ENCODE measurements at regions of chr11 and their contacts with region 1.

Region 1: DNA sequence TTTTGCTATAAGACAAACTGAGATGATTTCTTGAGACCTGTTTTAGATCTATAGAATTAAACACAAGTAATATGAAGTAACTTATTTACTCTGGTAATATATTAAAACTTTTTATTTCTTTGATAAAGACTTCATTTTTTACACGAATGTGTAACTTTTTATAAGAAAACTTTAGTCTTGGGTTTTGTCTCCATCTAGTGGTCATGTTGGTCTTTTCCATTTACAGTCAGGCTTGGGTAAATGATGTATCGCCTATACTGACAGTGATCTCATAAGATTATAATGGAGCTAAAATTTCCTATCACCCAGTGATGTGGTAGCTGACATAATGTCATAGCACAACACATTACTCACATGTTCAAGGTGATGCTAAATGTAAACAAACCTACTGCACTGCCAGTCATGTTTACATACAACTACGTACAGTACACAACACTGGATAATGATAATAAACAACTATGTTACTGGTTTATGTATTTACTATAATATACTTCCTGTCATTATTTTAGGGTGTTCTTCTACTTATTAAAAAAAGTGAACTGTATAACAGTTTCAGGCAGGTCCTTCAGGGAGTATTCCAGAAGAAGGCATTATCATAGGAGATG is 7.5 kb upstream of the C11orf97 start:
- DNase-seq: peak in 1 of 2 experiments; percentile 62
- H3K4me3 ChIP-seq: no peak overlapping the region
- H3K4me3 Mint-ChIP-seq: no peak overlapping the region
- H3K27ac Mint-ChIP-seq: no peak overlapping the region
- H3K4me1 ChIP-seq: no peaks in the 10 kb centered on the region
- H3K4me1 Mint-ChIP-seq: no peaks in the 10 kb centered on the region
- H3K27me3 ChIP-seq: no peaks in the 10 kb centered on the region
- H3K27me3 Mint-ChIP-seq: peaks cover 5% of the 10 kb centered on the region
- CTCF ChIP-seq: peak; percentile 87 to 88

Region 2: GRCh38 chr11:94171693-94172440 is 332.9 kb before region 1 on chr11:
- CTCF ChIA-PET with region 1: no interaction called
- POLR2A ChIA-PET with region 1: interaction called, 4 read pairs
- intact Hi-C with region 1: loop called (anchors 1 kb)
- DNase-seq: peak in 1 of 2 experiments; percentile 66
- H3K4me3 ChIP-seq: no peak overlapping the region
- H3K4me3 Mint-ChIP-seq: no peak overlapping the region
- H3K27ac Mint-ChIP-seq: no peak overlapping the region
- H3K4me1 ChIP-seq: no peaks in the 10 kb centered on the region
- H3K4me1 Mint-ChIP-seq: peaks cover 6% of the 10 kb centered on the region
- H3K27me3 ChIP-seq: no peaks in the 10 kb centered on the region
- H3K27me3 Mint-ChIP-seq: no peaks in the 10 kb centered on the region
- CTCF ChIP-seq: peak; percentile 86 to 92

Region 3: GRCh38 chr11:94183886-94184264 is 320.9 kb before region 1 on chr11:
- CTCF ChIA-PET with region 1: interaction called, 3 read pairs
- POLR2A ChIA-PET with region 1: no interaction called
- intact Hi-C with region 1: loop called (anchors 1 kb)
- DNase-seq: peak; percentile 81 to 87
- H3K4me3 ChIP-seq: no peak overlapping the region
- H3K4me3 Mint-ChIP-seq: no peak overlapping the region
- H3K27ac Mint-ChIP-seq: no peak overlapping the region
- H3K4me1 ChIP-seq: no peaks in the 10 kb centered on the region
- H3K4me1 Mint-ChIP-seq: peaks cover 11% of the 10 kb centered on the region
- H3K27me3 ChIP-seq: no peaks in the 10 kb centered on the region
- H3K27me3 Mint-ChIP-seq: no peaks in the 10 kb centered on the region
- CTCF ChIP-seq: peak; percentile 96 to 97

Region 4: DNA sequence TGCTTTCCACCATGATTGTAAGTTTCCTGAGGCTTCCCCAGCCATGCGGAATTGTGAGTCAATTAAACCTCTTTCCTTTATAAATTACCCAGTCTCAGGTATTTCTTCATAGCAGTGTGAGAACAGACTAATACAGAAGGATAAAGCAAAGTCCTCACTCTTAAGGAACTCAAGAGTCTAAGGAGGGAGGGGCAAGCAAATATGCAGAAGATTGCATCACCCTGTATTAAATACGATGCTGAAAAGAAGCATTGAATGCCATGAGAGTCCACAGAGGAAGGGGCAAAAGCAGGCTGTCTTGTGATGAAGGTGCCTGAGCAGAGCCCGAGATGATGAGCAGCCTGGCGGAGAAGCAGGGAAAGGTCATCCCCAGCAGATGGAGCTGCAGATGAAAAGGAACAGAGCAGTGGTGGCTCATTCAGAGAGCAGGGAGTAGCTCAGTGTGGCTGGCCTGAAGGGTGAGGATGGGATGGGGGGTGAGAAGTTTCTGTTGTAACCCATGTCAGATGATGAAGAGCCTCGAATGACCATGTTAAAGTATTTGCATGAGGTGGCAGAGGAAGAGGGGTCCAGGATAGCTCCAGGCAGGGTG is 206.7 kb before region 1 on chr11:
- CTCF ChIA-PET with region 1: no interaction called
- POLR2A ChIA-PET with region 1: no interaction called
- intact Hi-C with region 1: loop called (anchors 1 kb)
- DNase-seq: peak in 1 of 2 experiments; percentile 42
- H3K4me3 ChIP-seq: no peak overlapping the region
- H3K4me3 Mint-ChIP-seq: no peak overlapping the region
- H3K27ac Mint-ChIP-seq: no peak overlapping the region
- H3K4me1 ChIP-seq: no peaks in the 10 kb centered on the region
- H3K4me1 Mint-ChIP-seq: peaks cover 13% of the 10 kb centered on the region
- H3K27me3 ChIP-seq: no peaks in the 10 kb centered on the region
- H3K27me3 Mint-ChIP-seq: peaks cover 3% of the 10 kb centered on the region
- CTCF ChIP-seq: peak; percentile 11 to 49

Region 5: DNA sequence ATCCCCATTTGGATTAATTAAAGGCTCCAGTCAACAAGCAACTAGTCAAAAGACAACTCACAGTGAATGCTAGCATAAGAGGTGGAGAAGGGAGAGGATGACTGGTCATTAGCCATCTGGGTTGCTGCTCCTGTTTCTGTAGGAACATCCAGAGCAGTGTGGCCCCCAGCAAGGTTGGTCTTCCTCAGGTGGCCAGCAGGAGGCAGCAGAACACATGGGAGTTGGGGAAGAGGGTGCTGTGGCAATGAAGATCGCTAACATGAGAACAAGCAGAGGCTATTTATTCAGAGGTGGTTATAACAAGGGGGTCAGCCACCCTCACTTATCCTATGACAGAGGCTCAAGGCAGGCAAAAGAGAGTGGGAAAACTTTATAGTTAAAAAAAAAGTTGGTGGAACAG is 179.1 kb before region 1 on chr11:
- CTCF ChIA-PET with region 1: no interaction called
- POLR2A ChIA-PET with region 1: no interaction called
- intact Hi-C with region 1: loop called (anchors 10 kb)
- DNase-seq: peak in 1 of 2 experiments; percentile 61
- H3K4me3 ChIP-seq: no peak overlapping the region
- H3K4me3 Mint-ChIP-seq: no peak overlapping the region
- H3K27ac Mint-ChIP-seq: no peak overlapping the region
- H3K4me1 ChIP-seq: peaks cover 5% of the 10 kb centered on the region
- H3K4me1 Mint-ChIP-seq: peaks cover 9% of the 10 kb centered on the region
- H3K27me3 ChIP-seq: no peaks in the 10 kb centered on the region
- H3K27me3 Mint-ChIP-seq: no peaks in the 10 kb centered on the region
- CTCF ChIP-seq: peak; percentile 66 to 71

Region 6: GRCh38 chr11:94613120-94613519 is 108.3 kb after region 1 on chr11:
- CTCF ChIA-PET with region 1: no interaction called
- POLR2A ChIA-PET with region 1: no interaction called
- intact Hi-C with region 1: no loop called
- DNase-seq: no peak
- H3K4me3 ChIP-seq: no peak overlapping the region
- H3K4me3 Mint-ChIP-seq: no peak overlapping the region
- H3K27ac Mint-ChIP-seq: no peak overlapping the region
- H3K4me1 ChIP-seq: no peaks in the 10 kb centered on the region
- H3K4me1 Mint-ChIP-seq: no peaks in the 10 kb centered on the region
- H3K27me3 ChIP-seq: no peaks in the 10 kb centered on the region
- H3K27me3 Mint-ChIP-seq: no peaks in the 10 kb centered on the region
- CTCF ChIP-seq: no peak

Region 7: GRCh38 chr11:94731880-94732601 is 227.2 kb after region 1 on chr11:
- CTCF ChIA-PET with region 1: no interaction called
- POLR2A ChIA-PET with region 1: no interaction called
- intact Hi-C with region 1: no loop called
- DNase-seq: no peak
- H3K4me3 ChIP-seq: no peak overlapping the region
- H3K4me3 Mint-ChIP-seq: no peak overlapping the region
- H3K27ac Mint-ChIP-seq: peak overlapping the region; percentile 43
- H3K4me1 ChIP-seq: peaks cover 40% of the 10 kb centered on the region
- H3K4me1 Mint-ChIP-seq: peaks cover 11% of the 10 kb centered on the region
- H3K27me3 ChIP-seq: no peaks in the 10 kb centered on the region
- H3K27me3 Mint-ChIP-seq: no peaks in the 10 kb centered on the region
- CTCF ChIP-seq: no peak